ENCODE measurements at regions of chr17 and their contacts with region 1.

Region 1: DNA sequence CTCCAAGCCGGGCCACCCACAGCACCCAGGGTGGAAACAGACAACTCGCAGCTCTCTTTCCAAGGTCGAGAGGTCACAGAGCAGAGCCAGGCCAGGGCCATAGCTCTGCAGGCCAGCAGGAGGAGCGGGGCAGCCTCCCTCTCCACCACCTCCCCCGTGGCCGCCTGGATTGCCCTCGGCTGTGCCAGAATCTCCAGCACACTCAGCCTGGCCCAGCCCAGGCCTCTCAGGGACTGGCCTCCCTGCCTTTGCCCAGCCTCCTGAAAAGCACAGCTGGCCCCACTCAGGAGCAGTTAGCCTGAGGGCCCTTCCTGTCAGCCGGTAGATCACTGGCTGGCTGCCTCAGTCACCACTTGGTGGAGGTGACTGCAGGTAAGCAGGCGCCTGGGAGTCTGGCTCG is 85.8 kb upstream of the SEC14L1 start:
- DNase-seq: no peak

Region 2: GRCh38 chr17:76868176-76868668 is 186.7 kb before region 1 on chr17 and contains the start of gene MGAT5B:
- intact Hi-C with region 1: loop called (anchors 5 kb)
- DNase-seq: peak; percentile 91
- total RNA-seq, gene MGAT5B: 0.19 to 0.88 TPM

Region 3: DNA sequence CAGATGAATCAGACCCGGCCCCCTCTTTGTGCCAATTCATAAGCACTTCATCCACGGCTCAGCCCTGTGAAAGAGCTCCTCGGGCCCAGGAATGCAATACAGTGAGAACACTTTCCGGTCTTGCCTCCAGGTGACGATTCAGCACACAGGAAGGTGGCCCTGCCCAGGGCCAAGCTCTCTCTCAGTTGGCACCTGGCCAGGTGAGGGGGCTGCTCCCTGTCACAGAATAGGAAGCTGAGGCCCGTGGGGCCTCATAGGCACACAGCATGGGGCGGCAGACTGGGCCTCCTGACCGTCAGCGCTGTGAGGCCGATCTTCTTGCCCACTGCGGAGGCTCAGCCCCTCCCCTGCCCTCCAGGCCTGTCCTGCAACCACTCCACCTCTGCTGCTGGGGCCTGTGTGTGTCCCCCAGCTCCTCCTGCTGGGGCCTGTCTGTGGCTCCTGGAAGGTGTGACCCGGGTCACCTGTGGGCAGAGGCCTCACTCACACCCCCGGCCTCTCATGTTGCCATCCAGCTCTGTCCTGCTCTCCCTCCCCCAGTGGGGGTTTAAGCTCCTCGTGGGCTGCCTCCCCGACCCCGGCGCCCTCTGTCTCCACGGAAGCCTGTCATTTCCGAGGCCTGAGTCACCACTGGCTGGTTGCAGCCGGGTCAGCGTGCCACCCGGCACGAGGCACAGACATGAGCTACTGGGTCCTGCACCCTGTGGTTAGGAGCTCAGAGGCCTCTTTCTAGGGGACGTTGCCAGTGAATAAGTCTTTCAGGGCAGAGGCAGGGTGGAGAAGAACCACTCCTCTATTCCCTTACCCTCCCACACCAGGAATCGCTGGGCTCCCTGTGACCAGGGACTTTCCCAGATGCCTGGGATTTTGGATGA is 200.3 kb after region 1 on chr17:
- intact Hi-C with region 1: no loop called
- DNase-seq: no peak

Region 4: GRCh38 chr17:78383725-78384471 is 1329.0 kb after region 1 on chr17:
- intact Hi-C with region 1: no loop called
- DNase-seq: peak; percentile 98